AG04449 (cell line): ENCODE measurements at regions of chr12 and their contacts with region 1.

Region 1: DNA sequence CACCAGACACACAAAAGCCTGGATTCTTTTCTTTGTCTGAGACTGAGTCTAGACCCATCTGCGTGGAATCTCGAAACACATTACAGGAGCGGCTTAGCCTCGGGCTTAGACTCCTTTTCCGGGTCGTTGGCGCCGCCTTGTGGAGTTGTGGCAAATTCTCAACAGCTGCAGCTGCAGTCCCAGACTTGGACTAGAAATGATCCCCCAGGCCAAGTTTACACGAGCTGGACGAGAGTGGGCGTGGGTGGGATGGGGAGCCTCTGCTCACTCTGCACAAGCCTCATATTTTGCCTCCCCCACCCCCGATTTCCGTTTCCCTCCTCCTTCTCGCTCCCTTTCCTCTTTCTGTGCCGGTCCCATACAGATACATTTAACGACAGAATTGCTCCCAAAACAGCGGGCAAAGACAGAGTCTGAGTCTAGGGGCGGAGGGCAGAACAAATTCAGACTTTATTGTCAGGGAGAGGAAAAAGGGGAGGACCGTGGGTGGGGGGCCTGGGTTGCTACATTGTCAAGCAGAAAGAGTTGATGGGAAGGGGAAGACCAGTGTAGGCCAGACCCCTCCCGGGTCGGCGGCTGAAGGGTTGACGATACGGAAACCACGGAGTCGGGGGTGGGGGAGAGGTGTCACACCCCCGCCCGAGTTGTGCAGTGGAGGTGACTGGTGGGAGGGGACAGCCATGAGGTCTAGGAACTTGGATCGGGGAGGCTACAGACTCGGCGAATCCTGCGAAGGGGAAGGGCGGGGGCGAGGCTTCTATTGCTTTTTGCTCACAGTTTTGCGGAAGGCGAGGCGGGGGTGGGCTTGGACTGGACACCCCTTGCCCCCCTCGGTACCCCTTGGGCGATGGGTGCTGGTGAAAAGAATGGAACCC is 4.7 kb upstream of the GPR84 start:
- DNase-seq: peak; percentile 34
- H3K4me3 ChIP-seq: no peak overlapping the region
- CTCF ChIP-seq: peak; percentile 85

Region 2: GRCh38 chr12:53585448-53586125 is 783.4 kb before region 1 on chr12:
- CTCF ChIA-PET with region 1: no interaction called
- POLR2A ChIA-PET with region 1: no interaction called
- DNase-seq: no peak
- H3K4me3 ChIP-seq: no peak overlapping the region
- CTCF ChIP-seq: no peak

Region 3: GRCh38 chr12:54182086-54182485 is 186.9 kb before region 1 on chr12:
- CTCF ChIA-PET with region 1: no interaction called
- POLR2A ChIA-PET with region 1: no interaction called
- DNase-seq: no peak
- H3K4me3 ChIP-seq: no peak overlapping the region
- CTCF ChIP-seq: no peak

Region 4: GRCh38 chr12:54220092-54220557 is 148.8 kb before region 1 on chr12:
- CTCF ChIA-PET with region 1: interaction called, 98 read pairs
- POLR2A ChIA-PET with region 1: no interaction called
- DNase-seq: no peak
- H3K4me3 ChIP-seq: no peak overlapping the region
- CTCF ChIP-seq: peak; percentile 77

Region 5: GRCh38 chr12:54285150-54286041 is 83.5 kb before region 1 on chr12:
- CTCF ChIA-PET with region 1: interaction called, 131 read pairs
- POLR2A ChIA-PET with region 1: interaction called, 3 read pairs
- DNase-seq: no peak
- H3K4me3 ChIP-seq: peak overlapping the region; percentile 6; the same call in 1 of the 2 replicates
- CTCF ChIP-seq: no peak

Region 6: GRCh38 chr12:54337280-54337842 is 31.6 kb before region 1 on chr12:
- CTCF ChIA-PET with region 1: interaction called, 20 read pairs
- POLR2A ChIA-PET with region 1: no interaction called
- DNase-seq: no peak
- H3K4me3 ChIP-seq: no peak overlapping the region
- CTCF ChIP-seq: no peak

Region 7: GRCh38 chr12:54385241-54385914 is 16.4 kb after region 1 on chr12:
- CTCF ChIA-PET with region 1: interaction called, 108 read pairs
- POLR2A ChIA-PET with region 1: interaction called, 3 read pairs
- DNase-seq: no peak
- H3K4me3 ChIP-seq: no peak overlapping the region
- CTCF ChIP-seq: no peak

Region 8: GRCh38 chr12:54431911-54432814 is 63.2 kb after region 1 on chr12:
- CTCF ChIA-PET with region 1: interaction called, 129 read pairs
- POLR2A ChIA-PET with region 1: no interaction called
- DNase-seq: no peak
- H3K4me3 ChIP-seq: no peak overlapping the region
- CTCF ChIP-seq: no peak